Colonic mucosa (tissue), 4 donors: ENCODE measurements at regions of chr17 and their contacts with region 1.

Region 1: DNA sequence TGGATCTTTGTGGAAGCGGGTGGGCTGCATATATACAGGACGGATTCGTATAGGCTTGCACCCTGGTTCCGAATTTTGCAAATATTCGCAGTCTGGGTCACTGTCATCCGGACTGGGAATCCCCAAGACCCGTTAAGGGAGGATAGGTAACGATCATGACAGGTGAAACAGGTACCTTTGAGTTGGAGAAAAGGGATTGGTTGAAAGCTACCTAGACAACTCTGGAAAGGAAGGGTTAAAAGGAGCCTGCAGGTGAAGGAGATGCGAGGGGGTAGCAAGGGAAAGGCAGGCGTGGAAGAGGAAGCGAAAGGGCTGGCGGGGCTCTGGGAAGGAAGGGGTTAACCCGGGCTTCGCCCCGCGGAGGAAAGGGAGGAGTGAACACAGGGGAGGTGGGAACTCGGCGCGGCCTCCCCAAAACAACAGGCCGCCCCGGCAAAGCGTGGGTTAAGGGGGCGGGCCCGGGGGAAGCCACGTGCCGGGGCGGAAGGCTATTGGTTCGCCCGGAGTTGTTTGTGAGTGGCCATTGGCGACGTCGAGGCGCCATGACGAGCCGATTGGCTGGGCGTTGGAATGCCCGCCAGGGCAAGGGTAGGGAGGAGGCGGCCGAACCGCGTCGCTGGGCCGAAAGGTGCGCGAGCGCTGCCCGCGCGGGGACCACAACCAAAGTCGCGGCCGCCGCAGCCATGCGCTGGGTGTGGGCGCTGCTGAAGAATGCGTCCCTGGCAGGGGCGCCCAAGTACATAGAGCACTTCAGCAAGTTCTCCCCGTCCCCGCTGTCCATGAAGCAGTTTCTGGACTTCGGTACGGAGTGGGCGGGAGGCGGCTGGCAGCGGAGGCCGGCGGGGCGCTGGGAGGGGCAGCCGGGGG is at the start of gene PDK2:
- DNase-seq: peak; percentile 94
- H3K4me3 ChIP-seq: peak within 1 kb of the TSS; percentile 77
- H3K27ac ChIP-seq: peak within 1 kb of the TSS; percentile 80
- H3K4me1 ChIP-seq: peaks cover 16% of the 10 kb centered on the region
- H3K27me3 ChIP-seq: no peaks in the 10 kb centered on the region
- CTCF ChIP-seq: no peak
- total RNA-seq, gene PDK2: 48.8 to 56.4 TPM

Region 2: GRCh38 chr17:50151041-50151936 is 56.3 kb after region 1 on chr17:
- intact Hi-C with region 1: loop called (anchors 5 kb)
- DNase-seq: peak; percentile 94
- H3K4me3 ChIP-seq: peak overlapping the region; percentile 87
- H3K27ac ChIP-seq: peak overlapping the region; percentile 91
- H3K4me1 ChIP-seq: peaks cover 9% of the 10 kb centered on the region
- H3K27me3 ChIP-seq: no peaks in the 10 kb centered on the region
- CTCF ChIP-seq: peak; percentile 37

Region 3: GRCh38 chr17:50297407-50297865 is 202.4 kb after region 1 on chr17:
- intact Hi-C with region 1: loop called (anchors 10 kb)
- DNase-seq: peak; percentile 83
- H3K4me3 ChIP-seq: no peak overlapping the region
- H3K27ac ChIP-seq: no peak overlapping the region
- H3K4me1 ChIP-seq: no peaks in the 10 kb centered on the region
- H3K27me3 ChIP-seq: no peaks in the 10 kb centered on the region
- CTCF ChIP-seq: peak; percentile 97